HCT116 (cell line): ENCODE measurements at regions of chrX and their contacts with region 1.

Region 1: GRCh38 chrX:47361538-47362511 is 8.6 kb upstream of the ZNF157 start:
- DNase-seq: peak; percentile 84
- ATAC-seq: peak; percentile 97
- H3K4me3 ChIP-seq: peak overlapping the region; percentile 28 to 55
- H3K27ac ChIP-seq: peak overlapping the region; percentile 63
- H3K4me1 ChIP-seq: peaks cover 13 to 22% of the 10 kb centered on the region in 2 experiments
- H3K27me3 ChIP-seq: no peaks in the 10 kb centered on the region
- CTCF ChIP-seq: 0 out of 6 replicates have a peak, but pooled peaks of 1 of the 3 experiments have one; percentile 5
- POLR2A ChIP-seq: no peak
- RAD21 ChIP-seq: peak; percentile 44; the same call in 1 of the 2 replicates

Region 2: GRCh38 chrX:46935295-46935694 is 426.5 kb before region 1 on chrX:
- CTCF ChIA-PET with region 1: no interaction called
- POLR2A ChIA-PET with region 1: no interaction called
- RAD21 ChIA-PET with region 1: no interaction called
- intact Hi-C with region 1: no loop called
- DNase-seq: no peak
- ATAC-seq: no peak
- H3K4me3 ChIP-seq: no peak overlapping the region
- H3K27ac ChIP-seq: no peak overlapping the region
- H3K4me1 ChIP-seq: no peaks in the 10 kb centered on the region
- H3K27me3 ChIP-seq: no peaks in the 10 kb centered on the region
- CTCF ChIP-seq: no peak
- POLR2A ChIP-seq: no peak
- RAD21 ChIP-seq: no peak

Region 3: GRCh38 chrX:47384502-47384901 is 22.7 kb after region 1 on chrX:
- CTCF ChIA-PET with region 1: interaction called, 10 read pairs
- POLR2A ChIA-PET with region 1: no interaction called
- RAD21 ChIA-PET with region 1: no interaction called
- intact Hi-C with region 1: no loop called
- DNase-seq: peak; percentile 61
- ATAC-seq: peak; percentile 90
- H3K4me3 ChIP-seq: no peak overlapping the region
- H3K27ac ChIP-seq: no peak overlapping the region
- H3K4me1 ChIP-seq: peaks cover 0 to 6% of the 10 kb centered on the region in 2 experiments; a peak in 2 of 4 replicates
- H3K27me3 ChIP-seq: no peaks in the 10 kb centered on the region
- CTCF ChIP-seq: peak; percentile 61 to 71 (median 71); a peak in 5 of 6 replicates
- POLR2A ChIP-seq: no peak
- RAD21 ChIP-seq: peak; percentile 82

Region 4: GRCh38 chrX:48676106-48676892 is 1314.5 kb after region 1 on chrX:
- CTCF ChIA-PET with region 1: no interaction called
- POLR2A ChIA-PET with region 1: no interaction called
- RAD21 ChIA-PET with region 1: no interaction called
- intact Hi-C with region 1: no loop called
- DNase-seq: peak; percentile 53
- ATAC-seq: peak; percentile 96
- H3K4me3 ChIP-seq: peak overlapping the region; percentile 71 to 78
- H3K27ac ChIP-seq: peak overlapping the region; percentile 79
- H3K4me1 ChIP-seq: peaks cover 3 to 7% of the 10 kb centered on the region in 2 experiments; a peak in 1 of 4 replicates
- H3K27me3 ChIP-seq: no peaks in the 10 kb centered on the region
- CTCF ChIP-seq: no peak
- POLR2A ChIP-seq: peak; percentile 49
- RAD21 ChIP-seq: no peak